Mucosa of descending colon (tissue), 3 donors: ENCODE measurements at regions of chr9 and their contacts with region 1.

Region 1: DNA sequence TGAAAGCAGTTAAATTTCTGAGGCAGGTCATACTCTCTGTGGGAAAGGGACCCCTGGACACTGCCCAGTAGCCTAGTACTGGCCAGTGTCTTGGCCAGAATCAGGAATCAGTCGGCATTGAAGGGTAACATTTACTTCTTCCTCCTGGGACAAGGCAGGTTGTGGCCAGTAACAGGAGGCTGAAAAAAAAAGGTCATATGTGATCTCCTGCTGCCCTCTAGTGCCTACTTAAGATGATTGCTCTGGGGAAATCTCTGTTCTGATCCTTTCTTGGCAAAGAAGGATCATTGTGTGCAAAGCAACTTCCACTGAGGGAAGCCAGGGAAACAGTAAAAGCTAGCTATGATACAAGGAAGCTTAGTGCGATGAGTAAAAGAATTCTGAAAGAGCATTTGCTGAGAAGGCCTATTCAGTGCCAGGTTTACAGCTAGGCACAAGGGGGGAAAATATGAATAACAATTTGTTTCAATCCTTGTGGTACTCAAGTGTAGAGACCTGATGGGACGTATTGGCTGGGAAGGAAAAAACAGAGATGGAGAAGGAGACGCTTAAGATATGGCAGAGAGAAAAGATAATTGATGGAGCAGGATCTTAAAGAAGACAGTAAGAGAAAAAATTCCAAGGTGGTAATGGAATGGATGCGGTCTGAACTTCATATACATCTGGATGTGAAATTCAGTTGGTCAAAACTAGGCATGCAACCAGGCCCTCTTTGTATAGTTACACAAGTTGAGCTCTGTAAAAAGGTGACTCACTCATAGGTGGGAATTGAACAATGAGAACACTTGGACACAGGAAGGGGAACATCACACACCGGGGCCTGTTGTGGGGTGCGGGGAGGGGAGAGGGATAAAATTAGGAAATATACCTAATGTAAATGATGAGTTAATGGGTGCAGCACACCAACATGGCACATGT is 25.8 kb upstream of the TRIM32 start:
- DNase-seq: peak in 1 of 3 donors; percentile 23
- ATAC-seq: peak; percentile 95
- H3K4me3 ChIP-seq: no peak overlapping the region
- H3K4me1 ChIP-seq: no peaks in the 10 kb centered on the region
- CTCF ChIP-seq: peak; percentile 50

Region 2: DNA sequence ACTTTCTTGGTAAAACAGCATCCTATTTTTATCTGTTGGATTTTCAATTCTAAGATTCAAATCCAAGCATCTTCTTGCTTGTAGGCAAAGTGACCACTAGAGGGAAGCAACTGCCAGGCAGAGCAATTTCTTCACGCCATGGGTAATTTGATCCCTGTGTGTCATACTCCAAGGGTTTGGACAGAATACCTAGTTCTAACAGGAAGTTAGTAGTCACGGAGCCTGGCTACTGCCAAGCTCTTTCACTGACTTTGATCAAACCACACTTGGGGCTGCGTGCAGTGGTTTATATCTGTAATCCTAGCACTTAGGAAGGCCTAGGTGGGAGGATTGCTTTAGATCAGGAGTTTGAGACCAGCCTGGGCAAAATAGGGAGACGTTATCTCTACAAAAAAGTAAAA is 1069.7 kb before region 1 on chr9:
- intact Hi-C with region 1: loop called (anchors 5 to 10 kb)
- DNase-seq: no peak
- ATAC-seq: peak; percentile 99
- H3K4me3 ChIP-seq: no peak overlapping the region
- H3K4me1 ChIP-seq: no peaks in the 10 kb centered on the region
- CTCF ChIP-seq: peak; percentile 38